ENCODE measurements at regions of chr5 and their contacts with region 1.

Region 1: DNA sequence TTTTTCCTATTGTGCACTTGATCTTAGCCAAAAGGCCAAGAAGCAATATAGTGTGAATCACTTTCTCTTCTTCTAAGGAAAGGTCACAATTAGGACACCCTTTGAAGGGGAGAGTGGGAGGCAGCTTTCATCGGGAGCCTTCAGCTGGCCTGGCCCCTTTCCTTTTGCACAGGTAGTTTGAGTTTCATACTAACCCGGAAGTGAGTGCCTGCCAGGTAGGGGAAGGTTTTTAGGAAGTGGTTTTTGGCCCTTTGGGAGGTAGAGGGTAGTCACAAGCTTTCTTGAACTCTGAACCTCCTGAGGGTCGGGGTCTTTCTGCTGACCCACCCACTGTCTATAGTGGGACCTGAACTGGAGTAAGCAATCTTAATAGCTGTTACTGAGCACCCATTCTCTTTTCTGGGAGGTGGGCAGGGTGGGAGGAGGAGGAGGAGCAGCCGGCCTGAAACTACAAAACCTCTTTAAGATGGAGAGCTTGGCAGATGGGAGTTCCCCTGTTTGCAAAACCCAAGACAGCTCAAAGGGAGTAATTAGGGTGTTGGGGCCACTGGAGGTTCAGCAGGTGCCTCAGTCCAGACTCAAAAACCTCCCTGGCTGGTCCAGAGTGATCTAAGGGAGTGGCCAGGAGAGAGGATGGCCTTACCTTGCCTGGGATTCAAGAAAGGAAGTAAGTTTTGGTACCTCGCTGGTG is 6.0 kb downstream of the LARP1 start:
- DNase-seq: no peak
- H3K4me3 ChIP-seq: no peak overlapping the region
- H3K27ac ChIP-seq: no peak overlapping the region
- H3K4me1 ChIP-seq: peaks cover 23% of the 10 kb centered on the region
- H3K27me3 ChIP-seq: no peaks in the 10 kb centered on the region
- CTCF ChIP-seq: no peak
- POLR2A ChIP-seq: no peak

Region 2: DNA sequence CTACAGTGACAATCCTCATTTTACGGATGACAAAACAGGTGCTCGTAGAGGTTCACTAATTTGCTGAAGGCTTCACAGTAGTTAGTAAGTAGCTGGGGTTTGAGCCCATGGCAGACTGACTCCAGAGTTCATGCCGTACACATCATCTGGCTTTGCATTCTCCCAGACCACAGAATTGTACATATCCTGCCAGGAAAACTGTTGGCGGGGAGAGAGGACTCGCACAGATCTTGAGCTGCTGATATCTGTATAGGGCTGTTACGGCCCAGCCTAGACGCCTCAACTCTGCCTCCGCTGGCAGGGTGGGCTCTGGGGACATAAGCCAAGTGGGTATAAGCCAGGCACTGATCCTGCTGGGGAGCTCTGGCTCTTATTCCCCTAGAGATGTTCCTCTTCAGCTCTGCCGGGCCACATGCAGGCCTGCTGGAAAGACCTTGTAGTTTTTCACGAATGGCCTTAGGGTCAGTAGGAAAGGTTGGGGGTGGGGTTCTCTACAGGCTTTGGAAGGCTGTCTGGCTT is 10.3 kb after region 1 on chr5:
- CTCF ChIA-PET with region 1: interaction called, 7 read pairs
- POLR2A ChIA-PET with region 1: interaction called, 4 read pairs
- dilution Hi-C with region 1: no loop called
- intact Hi-C with region 1: loop called (anchors 1 kb)
- DNase-seq: peak; percentile 78
- H3K4me3 ChIP-seq: no peak overlapping the region
- H3K27ac ChIP-seq: peak overlapping the region; percentile 15
- H3K4me1 ChIP-seq: peaks cover 11% of the 10 kb centered on the region
- H3K27me3 ChIP-seq: no peaks in the 10 kb centered on the region
- CTCF ChIP-seq: no peak
- POLR2A ChIP-seq: no peak

Region 3: GRCh38 chr5:155004138-155004744 is 243.1 kb after region 1 on chr5:
- CTCF ChIA-PET with region 1: no interaction called
- POLR2A ChIA-PET with region 1: no interaction called
- dilution Hi-C with region 1: no loop called
- intact Hi-C with region 1: no loop called
- DNase-seq: peak; percentile 56
- H3K4me3 ChIP-seq: no peak overlapping the region
- H3K27ac ChIP-seq: no peak overlapping the region
- H3K4me1 ChIP-seq: peaks cover 4% of the 10 kb centered on the region
- H3K27me3 ChIP-seq: no peaks in the 10 kb centered on the region
- CTCF ChIP-seq: peak; percentile 60 to 73
- POLR2A ChIP-seq: no peak